GM13977 (cell line): ENCODE measurements at regions of chr4 and their contacts with region 1.

Region 1: GRCh38 chr4:10403633-10404445 is 53.4 kb downstream of the ZNF518B start:
- DNase-seq: peak; percentile 38
- CTCF ChIP-seq: peak; percentile 36

Region 2: GRCh38 chr4:10157478-10158332 is 246.1 kb before region 1 on chr4:
- in situ Hi-C with region 1: loop called (anchors 25 kb)
- DNase-seq: peak; percentile 75
- CTCF ChIP-seq: peak; percentile 83